Panc1 (cell line): ENCODE measurements at regions of chr19 and their contacts with region 1.

Region 1: DNA sequence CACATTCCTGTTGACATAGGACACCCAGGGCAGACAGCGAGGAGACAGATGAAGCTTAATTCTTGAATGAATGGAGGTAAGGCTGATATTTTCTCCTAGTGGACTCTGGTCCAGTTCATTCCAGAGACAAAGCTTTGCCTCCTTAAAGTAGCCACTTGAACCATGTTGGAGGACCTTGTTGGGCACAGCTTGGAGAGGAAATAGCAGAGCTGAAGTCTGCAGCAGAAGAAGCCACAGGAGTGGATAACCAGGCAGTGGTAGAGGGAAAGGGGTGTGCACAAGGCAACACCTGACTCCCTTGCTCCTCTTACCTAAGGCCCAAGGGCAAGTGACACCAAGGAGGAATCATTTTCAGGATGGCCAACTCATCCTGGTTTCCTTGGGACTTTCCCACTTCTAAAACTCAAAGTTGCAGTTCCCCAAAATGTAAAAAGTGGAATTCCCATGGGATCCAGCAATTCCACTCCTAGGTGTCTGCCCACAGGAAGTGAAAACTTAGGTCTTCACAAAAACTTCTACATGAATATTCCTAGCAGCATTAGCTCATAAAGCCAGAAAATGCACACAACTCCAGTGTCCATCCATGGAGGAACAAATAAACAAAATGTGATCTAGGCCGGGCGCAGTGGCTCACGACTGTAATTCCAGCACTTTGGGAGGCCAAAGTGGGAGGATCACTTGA is 6.6 kb upstream of the RFX2 start:
- DNase-seq: no peak
- ATAC-seq: no peak
- H3K4me3 ChIP-seq: no peak overlapping the region
- H3K27ac ChIP-seq: no peak overlapping the region
- H3K4me1 ChIP-seq: no peaks in the 10 kb centered on the region
- H3K27me3 ChIP-seq: no peaks in the 10 kb centered on the region
- CTCF ChIP-seq: no peak

Region 2: DNA sequence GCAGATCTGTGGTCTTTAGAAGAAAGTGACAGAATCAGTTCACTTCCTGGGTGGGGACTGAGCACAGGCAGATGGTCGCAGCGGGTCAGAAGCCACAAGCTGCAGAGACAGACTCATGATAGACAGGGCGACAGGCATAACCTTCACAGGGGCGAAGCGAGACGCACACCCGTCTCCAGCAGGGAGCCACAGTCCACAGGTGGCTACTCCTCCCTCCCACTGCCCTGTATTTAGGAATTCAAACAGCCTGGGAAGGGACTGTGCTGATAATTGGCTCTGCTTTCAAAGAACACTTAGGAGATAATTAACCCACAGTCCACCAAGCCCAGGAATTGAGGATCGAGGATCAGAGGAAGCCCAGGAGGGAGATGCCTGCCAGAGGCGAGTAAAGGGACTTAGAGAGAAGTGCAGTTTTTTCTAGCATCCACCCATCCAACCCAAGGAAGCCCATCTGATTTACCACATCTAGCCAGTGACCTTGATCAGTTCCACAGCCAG is 29.8 kb before region 1 on chr19:
- CTCF ChIA-PET with region 1: interaction called, 12 read pairs
- POLR2A ChIA-PET with region 1: interaction called, 4 read pairs
- in situ Hi-C with region 1: no loop called
- intact Hi-C with region 1: no loop called
- DNase-seq: no peak
- ATAC-seq: 0 out of 2 replicates have a peak, but pooled peaks have one; percentile 10
- H3K4me3 ChIP-seq: no peak overlapping the region
- H3K27ac ChIP-seq: peak overlapping the region; percentile 66
- H3K4me1 ChIP-seq: peaks cover 20% of the 10 kb centered on the region
- H3K27me3 ChIP-seq: no peaks in the 10 kb centered on the region
- CTCF ChIP-seq: no peak